CD4-positive, alpha-beta T cell (primary cell): ENCODE measurements at regions of chr17 and their contacts with region 1.

Region 1: DNA sequence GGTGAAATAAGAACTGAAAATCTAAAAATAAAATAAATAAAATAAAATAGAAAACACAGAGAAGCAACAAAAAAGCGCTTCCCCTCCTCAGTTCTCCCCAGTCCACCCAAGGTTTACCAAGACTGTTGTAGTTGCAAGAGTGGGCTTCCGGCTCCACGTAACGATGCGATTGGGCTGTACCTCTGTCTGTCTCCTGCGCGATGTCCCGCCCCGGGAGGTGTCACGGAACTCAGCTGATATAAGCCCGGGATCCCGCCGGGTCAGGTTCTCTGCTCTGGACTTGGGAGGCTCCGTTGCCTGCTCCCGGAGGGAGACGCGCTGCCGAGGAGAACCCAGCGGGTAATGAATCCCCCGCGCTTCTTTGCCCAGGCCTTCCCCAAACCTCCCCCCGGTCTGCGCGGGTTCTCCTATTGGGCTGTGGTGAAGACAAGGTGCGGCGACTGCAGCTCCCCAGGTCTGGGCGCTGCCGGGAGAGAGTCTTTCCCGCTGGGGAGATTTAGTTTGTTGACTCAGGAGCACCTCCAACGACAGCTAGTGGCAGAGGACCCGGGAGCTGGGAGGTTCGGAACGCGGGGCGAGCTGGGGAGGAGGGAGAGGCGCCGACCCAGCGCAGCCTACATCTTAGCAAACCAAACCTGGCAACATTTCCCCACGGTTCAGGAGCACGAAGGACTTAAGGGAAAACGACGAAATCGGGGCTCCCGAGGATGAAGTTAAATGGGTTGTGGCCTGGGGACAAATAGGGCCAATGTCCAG is at the start of gene SLFN5:
- DNase-seq: peak; percentile 89 to 97 (median 94)
- ATAC-seq: peak; percentile 79
- H3K4me3 ChIP-seq: peak within 1 kb of the TSS; percentile 99
- H3K4me3 Mint-ChIP-seq: peak within 1 kb of the TSS; percentile 99
- H3K27ac ChIP-seq: peak within 1 kb of the TSS; percentile 92 to 99
- H3K27ac Mint-ChIP-seq: peak within 1 kb of the TSS; percentile 100
- H3K4me1 ChIP-seq: peaks cover 42% of the 10 kb centered on the region
- H3K4me1 Mint-ChIP-seq: peaks cover 61% of the 10 kb centered on the region
- H3K27me3 ChIP-seq: no peaks in the 10 kb centered on the region
- H3K27me3 Mint-ChIP-seq: no peaks in the 10 kb centered on the region
- CTCF ChIP-seq: no peak
- total RNA-seq, gene SLFN5: 28.5 to 32.7 TPM

Region 2: DNA sequence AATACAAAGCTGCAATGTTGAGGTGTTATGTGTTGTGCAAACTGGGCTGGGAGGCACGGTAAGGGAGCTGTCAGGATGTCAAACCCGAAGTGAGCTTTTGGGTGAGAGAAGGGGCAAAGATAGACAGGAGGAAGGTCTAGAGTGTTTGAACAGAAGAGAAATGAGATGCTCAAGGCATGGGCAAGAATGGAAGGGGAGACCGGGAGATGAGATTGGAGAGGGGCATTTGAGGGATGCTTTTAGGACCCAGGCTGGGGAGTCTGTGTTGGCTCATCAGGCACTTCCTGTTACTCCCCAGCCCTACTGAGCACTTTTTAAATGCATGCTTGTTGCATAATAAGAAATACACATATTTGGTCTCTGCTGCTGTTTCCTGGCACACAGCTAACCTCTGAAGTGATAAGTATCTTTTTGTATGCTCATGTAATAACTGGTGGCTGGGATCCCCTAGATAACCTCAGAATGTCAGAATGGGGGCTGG is 81.7 kb before region 1 on chr17:
- CTCF ChIA-PET with region 1: interaction called, 3 read pairs
- POLR2A ChIA-PET with region 1: interaction called, 48 read pairs
- intact Hi-C with region 1: no loop called
- DNase-seq: peak in 6 of 14 experiments; percentile 15 to 78 (median 56)
- ATAC-seq: peak; percentile 70
- H3K4me3 ChIP-seq: peak overlapping the region; percentile 30
- H3K4me3 Mint-ChIP-seq: peak overlapping the region; percentile 67
- H3K27ac ChIP-seq: peak overlapping the region; percentile 62 to 68
- H3K27ac Mint-ChIP-seq: peak overlapping the region; percentile 89
- H3K4me1 ChIP-seq: peaks cover 53% of the 10 kb centered on the region
- H3K4me1 Mint-ChIP-seq: peaks cover 66% of the 10 kb centered on the region
- H3K27me3 ChIP-seq: no peaks in the 10 kb centered on the region
- H3K27me3 Mint-ChIP-seq: no peaks in the 10 kb centered on the region
- CTCF ChIP-seq: no peak

Region 3: DNA sequence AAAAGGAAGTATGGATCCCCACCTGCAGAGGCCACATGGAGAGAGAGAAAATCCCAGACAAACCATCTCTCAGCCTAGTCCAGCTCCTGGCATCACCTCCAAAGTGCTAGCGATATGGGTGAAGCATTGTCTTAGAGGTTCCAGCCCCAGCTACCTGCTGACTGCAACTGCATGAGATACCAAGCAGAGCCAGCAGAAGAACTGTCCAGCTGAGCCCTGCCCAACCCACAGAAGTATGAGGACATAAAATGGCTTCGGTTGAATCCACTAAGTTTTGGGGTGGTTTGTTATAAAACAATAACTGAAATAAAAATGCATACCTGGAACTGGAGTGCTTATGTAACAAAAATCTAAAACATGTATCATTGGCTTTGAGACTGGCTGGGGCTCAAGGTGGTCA is 20.5 kb before region 1 on chr17:
- CTCF ChIA-PET with region 1: interaction called, 8 read pairs
- POLR2A ChIA-PET with region 1: interaction called, 52 read pairs
- intact Hi-C with region 1: loop called in 1 of 2 experiments (anchors 1 kb)
- DNase-seq: no peak
- ATAC-seq: no peak
- H3K4me3 ChIP-seq: no peak overlapping the region
- H3K4me3 Mint-ChIP-seq: no peak overlapping the region
- H3K27ac ChIP-seq: no peak overlapping the region
- H3K27ac Mint-ChIP-seq: peak overlapping the region; percentile 64
- H3K4me1 ChIP-seq: peaks cover 35% of the 10 kb centered on the region
- H3K4me1 Mint-ChIP-seq: peaks cover 72% of the 10 kb centered on the region
- H3K27me3 ChIP-seq: no peaks in the 10 kb centered on the region
- H3K27me3 Mint-ChIP-seq: no peaks in the 10 kb centered on the region
- CTCF ChIP-seq: no peak

Region 4: DNA sequence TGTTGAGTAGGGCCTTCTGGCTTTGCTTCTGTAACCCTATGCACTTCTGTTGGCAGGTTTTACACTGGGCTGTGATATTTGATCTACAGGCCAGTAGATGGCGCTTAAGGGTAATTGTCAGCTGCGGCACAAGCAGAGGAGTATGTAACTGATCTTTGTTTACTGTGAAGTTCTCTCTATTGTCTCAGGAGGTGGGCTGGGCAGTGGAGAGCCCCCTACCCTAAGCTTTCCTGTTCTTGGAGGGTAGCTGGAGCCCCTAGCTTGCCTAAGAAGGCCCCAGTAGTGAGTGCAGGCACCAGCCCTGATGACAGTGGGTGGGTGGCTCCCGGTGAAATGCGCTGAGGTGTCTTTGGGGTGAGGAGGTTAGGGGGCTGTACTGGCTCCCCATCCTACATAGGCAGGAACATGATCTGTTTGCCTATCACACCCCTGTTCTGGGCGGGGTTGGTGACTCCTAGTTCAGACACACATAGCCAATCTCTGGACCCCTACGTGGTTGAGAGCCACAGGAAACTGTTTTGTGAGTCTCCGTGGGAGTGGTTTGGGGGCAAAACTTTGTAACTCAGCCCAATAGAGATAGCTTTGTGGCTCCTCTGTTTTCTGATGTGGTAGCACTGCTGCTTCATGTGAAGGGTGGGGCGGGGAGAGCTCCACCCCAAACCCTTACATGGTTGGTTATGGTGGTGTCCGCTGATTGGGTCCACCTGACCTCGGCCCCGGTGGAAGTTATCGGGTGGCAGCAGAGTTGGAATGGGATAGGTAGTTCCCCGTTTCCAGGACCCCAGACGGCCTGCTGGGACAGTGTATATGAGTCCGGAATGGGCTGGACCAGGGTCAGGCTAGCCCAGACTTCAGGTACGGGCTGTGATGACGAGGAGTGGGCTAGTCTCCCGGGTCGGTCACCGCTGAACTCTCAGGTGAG is 70.1 kb after region 1 on chr17:
- CTCF ChIA-PET with region 1: interaction called, 9 read pairs
- POLR2A ChIA-PET with region 1: interaction called, 81 read pairs
- intact Hi-C with region 1: loop called (anchors 1 to 2 kb)
- DNase-seq: peak; percentile 67 to 97 (median 76)
- ATAC-seq: peak; percentile 90
- H3K4me3 ChIP-seq: peak overlapping the region; percentile 77
- H3K4me3 Mint-ChIP-seq: peak overlapping the region; percentile 89
- H3K27ac ChIP-seq: peak overlapping the region; percentile 69 to 70
- H3K27ac Mint-ChIP-seq: peak overlapping the region; percentile 96
- H3K4me1 ChIP-seq: peaks cover 30% of the 10 kb centered on the region
- H3K4me1 Mint-ChIP-seq: peaks cover 67% of the 10 kb centered on the region
- H3K27me3 ChIP-seq: no peaks in the 10 kb centered on the region
- H3K27me3 Mint-ChIP-seq: no peaks in the 10 kb centered on the region
- CTCF ChIP-seq: peak; percentile 78

Region 5: GRCh38 chr17:35540589-35541404 is 297.8 kb after region 1 on chr17:
- CTCF ChIA-PET with region 1: interaction called, 14 read pairs
- POLR2A ChIA-PET with region 1: interaction called, 153 read pairs
- intact Hi-C with region 1: loop called (anchors 1 to 2 kb)
- DNase-seq: peak in 7 of 14 experiments; percentile 21 to 83 (median 59)
- ATAC-seq: peak; percentile 47
- H3K4me3 ChIP-seq: peak overlapping the region; percentile 56
- H3K4me3 Mint-ChIP-seq: peak overlapping the region; percentile 93
- H3K27ac ChIP-seq: peak overlapping the region; percentile 67 to 85
- H3K27ac Mint-ChIP-seq: peak overlapping the region; percentile 82
- H3K4me1 ChIP-seq: peaks cover 23% of the 10 kb centered on the region
- H3K4me1 Mint-ChIP-seq: peaks cover 60% of the 10 kb centered on the region
- H3K27me3 ChIP-seq: no peaks in the 10 kb centered on the region
- H3K27me3 Mint-ChIP-seq: no peaks in the 10 kb centered on the region
- CTCF ChIP-seq: no peak

Region 6: GRCh38 chr17:35747540-35748017 is 504.6 kb after region 1 on chr17:
- CTCF ChIA-PET with region 1: no interaction called
- POLR2A ChIA-PET with region 1: interaction called, 3 read pairs
- intact Hi-C with region 1: loop called in 1 of 2 experiments (anchors 10 kb)
- DNase-seq: peak; percentile 68 to 89 (median 76)
- ATAC-seq: peak; percentile 99
- H3K4me3 ChIP-seq: no peak overlapping the region
- H3K4me3 Mint-ChIP-seq: no peak overlapping the region
- H3K27ac ChIP-seq: no peak overlapping the region
- H3K27ac Mint-ChIP-seq: no peak overlapping the region
- H3K4me1 ChIP-seq: peaks cover 16% of the 10 kb centered on the region
- H3K4me1 Mint-ChIP-seq: peaks cover 4% of the 10 kb centered on the region
- H3K27me3 ChIP-seq: peaks cover 38 to 50% of the 10 kb centered on the region in 2 experiments
- H3K27me3 Mint-ChIP-seq: peaks cover 64% of the 10 kb centered on the region
- CTCF ChIP-seq: peak; percentile 80

Region 7: DNA sequence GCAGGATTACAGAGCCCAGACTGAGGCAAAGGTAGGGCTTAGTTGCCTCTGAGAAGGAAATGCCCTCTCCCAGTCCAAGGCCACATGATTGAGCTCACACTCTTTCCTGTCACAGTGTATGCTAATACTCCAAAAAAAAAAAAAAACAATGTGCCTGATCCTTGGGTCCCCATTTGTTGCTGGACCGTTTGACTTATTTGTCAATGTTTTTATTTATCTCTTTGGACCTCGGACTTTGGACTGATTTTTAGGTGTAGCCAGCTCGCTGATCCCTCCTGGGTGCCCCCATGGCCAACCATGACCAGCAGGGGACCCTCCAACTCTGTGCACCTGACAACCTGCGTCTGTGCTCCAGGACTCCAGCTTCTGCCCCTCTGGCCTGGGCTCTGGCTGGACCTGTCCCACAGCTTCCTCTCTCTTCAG is 738.9 kb after region 1 on chr17:
- CTCF ChIA-PET with region 1: no interaction called
- POLR2A ChIA-PET with region 1: no interaction called
- intact Hi-C with region 1: no loop called
- DNase-seq: no peak
- ATAC-seq: no peak
- H3K4me3 ChIP-seq: no peak overlapping the region
- H3K4me3 Mint-ChIP-seq: no peak overlapping the region
- H3K27ac ChIP-seq: no peak overlapping the region
- H3K27ac Mint-ChIP-seq: no peak overlapping the region
- H3K4me1 ChIP-seq: no peaks in the 10 kb centered on the region
- H3K4me1 Mint-ChIP-seq: no peaks in the 10 kb centered on the region
- H3K27me3 ChIP-seq: no peaks in the 10 kb centered on the region
- H3K27me3 Mint-ChIP-seq: peaks cover 19% of the 10 kb centered on the region
- CTCF ChIP-seq: no peak